Activated naive CD4-positive, alpha-beta T cell treated with anti-CD3 and anti-CD28 coated beads for 36 hours (primary cell): ENCODE measurements at regions of chr17 and their contacts with region 1.

Region 1: DNA sequence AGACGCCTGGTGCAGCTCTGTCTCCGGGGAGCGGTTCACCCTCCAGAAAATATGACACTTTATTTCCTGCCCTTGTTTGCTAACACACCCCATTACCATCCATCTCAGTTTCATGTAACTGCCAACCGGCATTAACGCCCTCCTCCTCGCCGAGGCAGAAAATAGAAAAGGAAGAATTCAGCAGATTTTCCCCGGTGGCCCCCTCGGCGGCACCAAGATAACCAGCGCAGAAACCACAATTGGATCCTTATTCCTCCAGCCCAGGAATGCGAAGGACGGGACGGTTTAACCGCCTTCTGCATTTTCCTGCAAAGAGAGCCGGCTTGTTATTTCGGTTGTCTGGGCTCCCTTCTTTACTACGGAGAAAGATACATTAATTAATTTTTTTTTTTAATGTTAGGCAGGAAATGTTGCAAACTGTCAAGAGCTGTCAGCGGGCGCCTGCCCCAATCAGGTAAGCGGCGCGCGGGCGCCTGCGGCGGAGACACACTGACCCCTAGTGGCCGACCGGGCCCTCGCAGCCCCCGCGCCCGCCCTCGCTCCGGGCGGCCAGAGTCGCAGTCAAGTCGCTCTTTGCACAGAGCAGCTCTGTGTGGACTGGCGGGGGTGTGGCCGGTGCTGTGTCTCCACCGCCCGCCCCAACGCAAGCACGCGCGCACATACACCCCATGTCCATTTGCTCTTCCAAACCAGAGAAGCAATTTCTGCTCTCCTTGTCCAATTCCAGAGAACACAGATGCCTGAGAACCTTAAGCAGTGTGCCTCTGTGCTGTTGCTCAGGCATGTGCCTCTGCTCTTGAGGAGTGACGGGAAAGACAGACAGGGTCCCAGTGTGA is 53.6 kb downstream of the C17orf67 start:
- DNase-seq: peak; percentile 89
- H3K4me3 Mint-ChIP-seq: peak overlapping the region; percentile 83
- H3K27ac Mint-ChIP-seq: peak overlapping the region; percentile 91
- H3K4me1 Mint-ChIP-seq: peaks cover 29% of the 10 kb centered on the region
- H3K27me3 Mint-ChIP-seq: no peaks in the 10 kb centered on the region

Region 2: GRCh38 chr17:56289321-56289720 is 490.8 kb before region 1 on chr17:
- CTCF ChIA-PET with region 1: no interaction called
- intact Hi-C with region 1: no loop called
- DNase-seq: no peak
- H3K4me3 Mint-ChIP-seq: no peak overlapping the region
- H3K27ac Mint-ChIP-seq: no peak overlapping the region
- H3K4me1 Mint-ChIP-seq: peaks cover 23% of the 10 kb centered on the region
- H3K27me3 Mint-ChIP-seq: no peaks in the 10 kb centered on the region

Region 3: DNA sequence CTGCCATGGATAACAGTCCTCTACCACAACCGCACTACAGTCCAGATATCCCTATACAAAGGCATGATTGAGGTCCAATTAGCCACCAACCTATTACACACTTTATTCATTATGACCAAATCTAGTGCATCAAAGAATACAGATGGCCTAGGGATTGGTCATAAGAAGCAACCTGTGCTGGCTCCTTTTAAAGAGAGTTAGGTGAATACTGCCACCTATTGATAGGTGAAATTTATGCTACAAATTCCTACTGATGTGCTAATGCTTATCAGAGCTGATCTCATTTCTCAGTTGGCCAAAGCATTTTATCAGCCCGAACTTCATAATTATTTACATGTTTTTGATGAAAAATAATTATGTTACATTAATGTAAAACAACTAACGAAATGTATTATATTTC is 460.6 kb before region 1 on chr17:
- CTCF ChIA-PET with region 1: no interaction called
- intact Hi-C with region 1: loop called (anchors 10 kb)
- DNase-seq: no peak
- H3K4me3 Mint-ChIP-seq: no peak overlapping the region
- H3K27ac Mint-ChIP-seq: no peak overlapping the region
- H3K4me1 Mint-ChIP-seq: no peaks in the 10 kb centered on the region
- H3K27me3 Mint-ChIP-seq: peaks cover 4% of the 10 kb centered on the region

Region 4: DNA sequence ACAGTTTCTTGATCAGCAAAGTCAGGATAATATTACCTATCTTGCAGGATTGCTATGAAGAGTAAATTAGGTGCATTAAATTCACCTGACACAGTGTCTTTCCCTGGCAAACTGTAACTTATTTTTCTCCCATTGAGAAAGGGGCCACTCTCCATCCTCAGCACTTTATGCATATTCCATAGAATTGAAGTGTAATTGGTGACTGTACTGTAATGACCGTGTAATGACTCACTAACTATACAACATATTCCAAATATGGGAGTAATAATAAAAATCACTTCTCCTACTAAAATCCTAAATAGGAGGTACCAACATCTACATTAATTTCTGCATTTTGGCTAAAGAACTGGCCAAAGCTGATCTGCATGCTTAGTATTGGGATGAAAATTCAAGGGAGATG is 328.5 kb before region 1 on chr17:
- CTCF ChIA-PET with region 1: no interaction called
- intact Hi-C with region 1: no loop called
- DNase-seq: no peak
- H3K4me3 Mint-ChIP-seq: no peak overlapping the region
- H3K27ac Mint-ChIP-seq: no peak overlapping the region
- H3K4me1 Mint-ChIP-seq: no peaks in the 10 kb centered on the region
- H3K27me3 Mint-ChIP-seq: peaks cover 17% of the 10 kb centered on the region

Region 5: GRCh38 chr17:56499799-56500388 is 280.2 kb before region 1 on chr17:
- CTCF ChIA-PET with region 1: interaction called, 5 read pairs
- intact Hi-C with region 1: loop called (anchors 2 kb)
- DNase-seq: peak; percentile 64
- H3K4me3 Mint-ChIP-seq: no peak overlapping the region
- H3K27ac Mint-ChIP-seq: no peak overlapping the region
- H3K4me1 Mint-ChIP-seq: no peaks in the 10 kb centered on the region
- H3K27me3 Mint-ChIP-seq: no peaks in the 10 kb centered on the region

Region 6: DNA sequence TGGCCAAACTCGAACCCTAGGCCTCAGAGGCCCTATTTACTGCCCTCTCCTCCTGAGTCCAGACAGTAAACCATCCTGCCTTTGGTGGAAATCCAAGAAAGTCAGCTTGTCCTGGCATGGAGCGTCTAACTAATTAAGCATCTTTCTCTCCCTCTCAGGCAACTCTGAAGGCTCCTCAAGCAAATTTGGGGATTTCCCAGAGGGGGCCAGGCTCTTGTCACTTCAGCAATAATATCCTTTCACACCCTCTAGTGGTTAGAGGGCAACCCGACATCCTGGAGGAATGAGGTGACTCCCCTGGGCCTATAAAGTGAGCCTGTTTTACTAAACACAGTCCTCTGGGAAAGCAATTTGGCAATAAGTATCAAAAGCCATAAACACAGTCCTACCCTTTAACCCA is 126.2 kb before region 1 on chr17:
- CTCF ChIA-PET with region 1: interaction called, 3 read pairs
- intact Hi-C with region 1: loop called (anchors 1 kb)
- DNase-seq: peak; percentile 90
- H3K4me3 Mint-ChIP-seq: no peak overlapping the region
- H3K27ac Mint-ChIP-seq: no peak overlapping the region
- H3K4me1 Mint-ChIP-seq: peaks cover 5% of the 10 kb centered on the region
- H3K27me3 Mint-ChIP-seq: no peaks in the 10 kb centered on the region

Region 7: DNA sequence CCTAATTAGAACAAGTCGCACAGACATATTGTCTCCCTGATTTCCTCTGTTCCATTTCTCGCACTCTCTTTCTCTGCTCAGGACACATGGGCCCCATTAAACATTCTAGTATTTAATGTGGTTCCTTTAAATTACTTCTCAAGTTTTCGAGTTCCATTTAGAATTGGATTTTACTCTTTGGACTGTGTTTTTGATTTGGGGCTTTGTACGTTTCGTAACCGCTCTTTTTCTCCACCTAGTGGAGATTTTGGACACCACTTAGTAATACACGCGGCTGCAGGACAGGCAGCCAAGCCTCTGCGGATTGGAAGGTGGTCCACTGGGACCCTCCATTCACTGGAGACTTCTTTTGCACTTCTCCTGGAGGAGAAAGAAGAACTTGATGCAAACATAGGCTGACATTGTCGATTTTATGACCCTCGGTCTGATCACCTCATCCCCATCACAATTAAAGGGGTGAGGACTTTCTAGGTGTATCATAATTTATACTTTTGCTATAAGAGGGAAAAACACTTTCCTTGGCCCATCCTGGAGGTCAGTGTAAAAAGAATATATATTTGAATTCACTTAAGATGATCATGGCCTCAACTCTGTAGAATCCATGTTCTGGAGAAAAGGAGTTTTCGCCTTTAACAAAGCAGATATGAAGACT is 100.9 kb before region 1 on chr17:
- CTCF ChIA-PET with region 1: interaction called, 13 read pairs
- intact Hi-C with region 1: loop called (anchors 1 kb)
- DNase-seq: no peak
- H3K4me3 Mint-ChIP-seq: peak overlapping the region; percentile 69
- H3K27ac Mint-ChIP-seq: no peak overlapping the region
- H3K4me1 Mint-ChIP-seq: peaks cover 19% of the 10 kb centered on the region
- H3K27me3 Mint-ChIP-seq: peaks cover 33% of the 10 kb centered on the region

Region 8: DNA sequence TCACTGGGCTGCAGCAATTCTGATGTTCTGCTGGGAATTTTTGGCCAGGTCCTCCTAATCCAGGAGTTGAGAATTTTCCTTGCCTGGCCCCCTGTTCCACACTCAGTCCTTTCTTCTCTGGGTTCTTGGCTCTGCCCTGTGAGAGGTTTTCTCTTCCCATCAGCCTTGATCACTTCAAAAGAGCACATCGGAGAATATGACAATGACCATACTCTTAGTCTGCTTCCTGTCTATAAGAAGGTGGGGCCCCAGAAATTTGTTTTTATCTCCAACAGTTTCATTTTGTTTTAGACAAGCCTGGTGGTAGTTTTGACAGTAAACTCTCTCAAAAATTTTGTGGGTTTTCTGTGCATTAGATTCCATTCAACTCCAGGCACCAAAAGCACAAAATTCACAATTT is 17.1 kb before region 1 on chr17:
- CTCF ChIA-PET with region 1: interaction called, 34 read pairs
- intact Hi-C with region 1: loop called (anchors 1 kb)
- DNase-seq: peak; percentile 37
- H3K4me3 Mint-ChIP-seq: peak overlapping the region; percentile 26
- H3K27ac Mint-ChIP-seq: peak overlapping the region; percentile 75
- H3K4me1 Mint-ChIP-seq: peaks cover 25% of the 10 kb centered on the region
- H3K27me3 Mint-ChIP-seq: no peaks in the 10 kb centered on the region

Region 9: DNA sequence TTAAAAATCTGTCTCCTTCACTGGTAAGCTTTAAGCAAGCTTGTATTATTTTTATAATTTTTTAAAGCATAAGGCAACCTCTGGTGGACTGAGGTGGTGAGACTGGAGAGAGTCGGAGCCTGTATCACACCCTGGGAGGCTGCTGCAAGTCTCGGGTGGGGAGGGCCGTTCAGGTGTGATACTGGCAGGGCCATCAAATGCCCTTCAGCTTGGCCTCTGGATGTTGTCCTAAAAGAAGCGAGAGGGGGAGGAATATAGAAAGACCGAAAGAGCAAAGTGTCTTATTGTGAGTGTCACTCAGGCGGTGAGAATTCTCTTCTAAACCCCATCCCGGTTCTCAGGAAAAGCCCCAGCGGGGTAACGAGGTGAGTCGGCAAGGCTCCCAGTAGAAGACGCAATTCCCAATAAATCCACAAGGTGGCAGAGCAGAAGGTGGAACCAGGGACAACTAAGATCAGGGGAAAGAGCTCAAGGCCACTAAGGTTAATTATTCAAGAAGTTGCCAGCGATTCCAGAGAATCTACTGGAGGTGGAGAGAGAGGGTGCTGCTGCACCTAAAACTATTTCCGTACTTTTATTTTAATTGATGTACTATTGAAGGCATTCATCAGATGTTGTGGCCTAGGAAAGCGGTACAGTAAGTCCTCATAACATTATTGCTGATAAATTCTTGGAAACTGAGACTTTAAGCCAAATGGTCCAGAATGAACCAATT is 39.5 kb after region 1 on chr17:
- CTCF ChIA-PET with region 1: interaction called, 3 read pairs
- intact Hi-C with region 1: loop called (anchors 1 kb)
- DNase-seq: peak; percentile 88
- H3K4me3 Mint-ChIP-seq: no peak overlapping the region
- H3K27ac Mint-ChIP-seq: no peak overlapping the region
- H3K4me1 Mint-ChIP-seq: peaks cover 8% of the 10 kb centered on the region
- H3K27me3 Mint-ChIP-seq: no peaks in the 10 kb centered on the region

Region 10: GRCh38 chr17:57195785-57196460 is 415.8 kb after region 1 on chr17:
- CTCF ChIA-PET with region 1: no interaction called
- intact Hi-C with region 1: no loop called
- DNase-seq: no peak
- H3K4me3 Mint-ChIP-seq: no peak overlapping the region
- H3K27ac Mint-ChIP-seq: no peak overlapping the region
- H3K4me1 Mint-ChIP-seq: no peaks in the 10 kb centered on the region
- H3K27me3 Mint-ChIP-seq: no peaks in the 10 kb centered on the region